ENCODE measurements at regions of chr21 and their contacts with region 1.

Region 1: DNA sequence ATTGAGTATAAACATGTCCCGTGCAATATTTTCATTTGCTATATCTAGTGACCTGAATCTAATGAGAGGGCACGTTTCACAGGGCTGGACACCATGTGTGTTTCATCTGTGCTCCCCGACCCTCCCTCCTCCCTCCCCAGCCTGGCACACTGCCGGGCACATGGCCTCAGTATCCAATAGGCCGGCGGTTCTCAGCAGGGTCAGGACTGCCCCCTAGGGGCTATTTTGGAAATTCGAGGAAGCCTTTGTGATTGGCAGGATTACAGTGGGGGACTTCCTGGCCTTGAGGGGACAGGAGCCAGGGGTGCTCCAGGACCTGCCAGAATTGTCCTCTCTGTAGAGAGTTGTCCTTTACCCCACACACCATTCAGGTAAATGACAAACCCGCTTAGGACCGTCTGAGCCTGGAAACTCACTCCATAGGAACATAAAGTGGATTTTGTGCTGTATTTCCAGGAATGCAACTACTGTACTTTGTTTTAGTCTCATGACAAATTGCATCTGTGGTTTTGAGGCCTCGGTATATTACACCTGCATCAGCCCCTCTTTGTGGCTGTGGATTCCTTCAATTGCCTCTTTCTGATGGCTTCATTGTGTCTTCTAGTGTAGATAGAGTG is 109.5 kb upstream of the SIM2 start:
- DNase-seq: no peak

Region 2: DNA sequence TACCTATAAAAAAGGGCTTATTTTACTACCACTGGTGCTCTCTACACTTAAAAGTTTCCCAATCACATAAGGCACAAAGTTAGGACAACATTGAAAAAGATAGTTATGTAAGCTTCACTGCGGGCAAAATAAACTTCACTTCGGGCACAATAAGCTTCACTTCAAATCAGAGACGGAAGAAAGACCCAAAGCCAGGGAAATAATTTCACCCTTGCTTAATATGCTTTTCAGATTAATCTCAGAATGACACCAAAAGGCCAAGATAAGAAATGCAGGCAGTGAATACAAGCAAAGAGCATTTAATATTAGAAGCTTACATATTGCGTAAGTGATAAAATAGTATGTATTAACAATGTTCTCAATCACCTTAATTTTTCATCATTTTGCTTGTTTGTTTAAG is 973.4 kb before region 1 on chr21:
- intact Hi-C with region 1: no loop called
- DNase-seq: no peak

Region 3: DNA sequence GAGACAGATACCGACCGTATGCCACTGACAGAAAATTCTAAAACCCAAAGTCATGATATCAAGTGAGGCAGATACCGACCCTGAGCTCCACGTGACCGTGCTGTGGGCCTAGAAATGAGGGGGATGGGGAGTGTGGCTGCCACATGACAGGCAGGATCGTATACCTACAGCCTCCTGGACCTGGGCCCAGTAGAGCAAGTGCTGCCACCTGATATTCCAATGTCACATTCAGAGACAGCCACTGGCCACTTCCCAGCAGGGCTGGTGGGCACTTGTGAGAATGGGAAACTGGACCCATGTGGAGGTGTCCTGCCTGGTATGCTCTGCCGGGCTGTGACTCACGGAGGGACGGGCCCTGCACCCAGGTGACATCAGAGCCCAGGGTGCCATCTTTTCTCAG is 65.0 kb before region 1 on chr21:
- intact Hi-C with region 1: loop called (anchors 10 kb)
- DNase-seq: no peak